GM12878 (cell line): ENCODE measurements at regions of chr10 and their contacts with region 1.

Region 1: DNA sequence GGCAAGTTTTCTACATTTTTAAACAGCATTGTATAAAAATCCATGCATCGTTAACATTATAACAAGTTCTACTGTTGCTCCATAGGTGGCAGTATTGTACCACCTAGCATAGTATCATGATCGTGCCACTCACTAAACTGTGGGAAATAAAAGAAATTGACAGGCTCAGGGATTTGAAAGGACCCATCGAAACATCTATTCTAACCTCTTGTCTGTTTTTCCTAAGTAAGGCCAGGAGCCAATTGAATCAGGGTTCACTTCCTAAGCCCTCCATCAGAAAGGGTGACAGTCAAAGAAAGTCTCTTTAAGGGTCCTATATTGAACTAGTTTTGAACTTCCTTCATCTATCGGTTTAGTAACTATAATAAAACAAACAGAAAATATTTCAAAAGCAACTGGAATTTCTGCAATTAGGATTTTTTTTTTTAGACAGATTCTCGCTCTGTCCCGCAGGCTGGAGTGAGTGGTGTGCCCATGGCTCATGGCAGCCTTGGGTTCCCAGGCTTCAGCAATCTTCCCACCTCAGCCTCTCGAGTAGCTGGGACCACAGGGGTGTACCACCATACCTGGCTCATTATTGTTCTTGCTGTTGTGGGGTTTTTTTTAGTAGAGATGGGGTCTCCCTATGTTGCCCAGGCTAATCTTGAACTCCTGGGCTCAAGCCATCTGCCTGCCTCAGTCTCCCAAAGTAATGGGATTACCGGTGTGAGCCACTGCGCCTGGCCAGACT is 9.4 kb downstream of the HACD1 start:
- DNase-seq: no peak
- ATAC-seq: peak; percentile 91
- H3K4me3 ChIP-seq: no peak overlapping the region
- H3K27ac ChIP-seq: no peak overlapping the region
- H3K4me1 ChIP-seq: no peaks in the 10 kb centered on the region
- H3K27me3 ChIP-seq: no peaks in the 10 kb centered on the region
- CTCF ChIP-seq: peak; percentile 74 to 88 (median 79)
- EP300 ChIP-seq: no peak
- POLR2A ChIP-seq: no peak
- RAD21 ChIP-seq: peak; percentile 96

Region 2: DNA sequence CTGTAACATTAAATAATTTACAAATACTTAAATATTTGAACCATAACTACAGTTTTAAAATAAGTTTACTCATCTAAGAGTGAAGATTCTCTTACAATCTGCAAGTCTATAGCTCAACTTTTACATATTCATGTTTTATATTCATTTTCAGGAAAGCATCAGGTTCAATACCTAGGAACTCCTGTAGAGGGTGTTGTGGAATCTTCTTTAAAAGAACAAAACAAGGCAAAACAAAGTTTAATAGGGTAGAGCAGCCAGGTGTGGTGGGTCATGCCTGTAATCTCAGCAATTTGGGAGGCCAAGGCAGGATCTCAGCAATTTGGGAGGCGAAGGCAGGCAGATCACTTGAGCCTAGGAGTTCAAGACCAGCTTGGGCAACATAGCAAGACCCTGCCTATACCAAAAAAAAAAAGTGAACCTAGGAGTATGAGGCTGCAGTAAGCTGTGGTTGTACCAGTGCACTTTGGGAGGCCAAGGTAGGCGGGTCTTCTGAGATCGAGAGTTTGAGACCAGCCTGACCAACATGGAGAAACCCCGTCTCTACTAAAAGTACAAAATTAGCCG is 198.5 kb before region 1 on chr10:
- CTCF ChIA-PET with region 1: interaction called, 19 read pairs
- POLR2A ChIA-PET with region 1: no interaction called
- RAD21 ChIA-PET with region 1: interaction called, 4 read pairs
- SMC1A ChIA-PET with region 1: interaction called, 4 read pairs
- in situ Hi-C with region 1: no loop called
- intact Hi-C with region 1: no loop called
- DNase-seq: no peak
- ATAC-seq: peak; percentile 54; the same call in 2 of the 3 replicates
- H3K4me3 ChIP-seq: no peak overlapping the region
- H3K27ac ChIP-seq: no peak overlapping the region
- H3K4me1 ChIP-seq: no peaks in the 10 kb centered on the region
- H3K27me3 ChIP-seq: no peaks in the 10 kb centered on the region
- CTCF ChIP-seq: peak; percentile 40 to 50 (median 50)
- EP300 ChIP-seq: no peak
- POLR2A ChIP-seq: no peak
- RAD21 ChIP-seq: peak; percentile 47

Region 3: DNA sequence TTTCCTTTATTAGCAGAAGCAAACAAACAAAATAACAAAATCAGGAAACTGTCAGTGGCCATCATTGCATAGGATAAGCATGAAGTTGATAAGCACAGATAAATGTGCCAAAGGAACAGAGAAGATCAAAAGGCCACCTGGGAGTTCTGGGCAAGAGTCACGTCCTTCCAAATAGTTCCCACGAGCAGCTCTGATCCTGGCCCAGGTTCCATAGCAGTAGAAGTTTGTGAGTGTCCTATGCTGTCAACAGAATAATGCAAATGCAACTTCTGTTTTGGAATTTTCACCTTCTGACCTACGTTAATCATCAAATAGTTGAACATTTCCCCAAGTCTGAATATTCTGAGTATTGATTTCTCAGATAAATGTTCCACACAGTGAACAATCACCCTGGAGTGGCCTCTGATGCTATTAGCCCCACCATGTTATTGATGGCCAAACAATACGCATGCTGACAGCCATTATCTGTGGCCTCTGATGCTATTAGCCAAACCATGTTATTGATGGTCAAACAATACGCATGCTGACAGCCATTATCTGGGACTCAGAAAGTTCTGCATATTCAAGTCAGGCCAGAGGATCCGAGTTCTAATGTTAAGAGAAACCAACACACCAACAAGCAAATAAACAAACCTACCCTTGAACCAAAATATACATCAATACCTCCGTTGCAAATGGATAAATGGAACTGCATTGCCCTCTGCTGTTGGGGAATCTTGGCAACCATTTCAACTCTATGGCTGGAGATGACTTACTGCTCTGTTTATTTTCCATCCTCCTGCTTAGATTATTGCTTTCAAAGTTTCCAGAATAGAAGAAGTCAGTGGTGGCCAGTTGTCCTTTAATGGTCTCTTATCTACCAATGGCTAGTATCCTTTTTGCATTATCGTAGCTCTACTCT is 264.7 kb after region 1 on chr10:
- CTCF ChIA-PET with region 1: interaction called, 4 read pairs
- POLR2A ChIA-PET with region 1: no interaction called
- RAD21 ChIA-PET with region 1: no interaction called
- SMC1A ChIA-PET with region 1: interaction called, 3 read pairs
- in situ Hi-C with region 1: no loop called
- intact Hi-C with region 1: loop called (anchors 1 kb)
- DNase-seq: no peak
- ATAC-seq: peak; percentile 68
- H3K4me3 ChIP-seq: no peak overlapping the region
- H3K27ac ChIP-seq: no peak overlapping the region
- H3K4me1 ChIP-seq: no peaks in the 10 kb centered on the region
- H3K27me3 ChIP-seq: no peaks in the 10 kb centered on the region
- CTCF ChIP-seq: peak; percentile 33 to 52 (median 35); a peak in 4 of 6 replicates
- EP300 ChIP-seq: no peak
- POLR2A ChIP-seq: no peak
- RAD21 ChIP-seq: peak; percentile 51

Region 4: GRCh38 chr10:18214691-18215563 is 607.2 kb after region 1 on chr10:
- CTCF ChIA-PET with region 1: interaction called, 3 read pairs
- POLR2A ChIA-PET with region 1: no interaction called
- RAD21 ChIA-PET with region 1: no interaction called
- SMC1A ChIA-PET with region 1: interaction called, 3 read pairs
- in situ Hi-C with region 1: loop called (anchors 10 kb)
- intact Hi-C with region 1: loop called (anchors 1 kb)
- DNase-seq: no peak
- ATAC-seq: peak; percentile 84
- H3K4me3 ChIP-seq: no peak overlapping the region
- H3K27ac ChIP-seq: no peak overlapping the region
- H3K4me1 ChIP-seq: no peaks in the 10 kb centered on the region
- H3K27me3 ChIP-seq: no peaks in the 10 kb centered on the region; a peak in 1 of 4 replicates
- CTCF ChIP-seq: peak; percentile 66 to 82 (median 77)
- EP300 ChIP-seq: no peak
- POLR2A ChIP-seq: no peak
- RAD21 ChIP-seq: peak; percentile 84

Region 5: DNA sequence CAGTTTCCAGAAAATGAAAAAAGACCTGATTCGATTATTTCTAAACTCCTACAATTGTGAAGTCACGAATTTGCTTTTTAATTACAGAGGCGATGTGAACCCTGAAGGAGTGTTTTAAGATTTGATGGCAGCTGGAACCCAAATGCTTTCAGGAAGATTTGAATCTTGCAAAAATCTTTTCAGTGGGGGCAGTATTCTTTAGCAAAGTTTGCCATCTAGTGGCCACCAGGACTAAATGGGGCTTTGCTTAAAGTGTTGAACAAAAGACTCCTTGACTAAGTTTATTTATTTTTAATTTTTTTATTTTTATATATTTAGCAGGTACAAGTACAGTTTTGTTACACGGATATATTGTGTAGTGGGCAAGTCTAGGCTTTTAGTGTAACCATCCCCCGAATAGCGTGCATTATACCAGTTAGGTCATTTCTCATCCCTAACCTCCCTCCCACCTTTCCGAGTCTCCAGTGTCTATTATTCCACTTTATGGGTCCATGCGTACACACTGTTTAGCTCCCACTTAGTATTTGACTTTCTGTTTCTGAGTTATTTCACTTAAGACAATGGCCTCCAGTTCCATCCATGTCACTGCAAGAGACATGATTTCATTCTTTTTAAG is 631.2 kb after region 1 on chr10:
- CTCF ChIA-PET with region 1: interaction called, 3 read pairs
- POLR2A ChIA-PET with region 1: no interaction called
- RAD21 ChIA-PET with region 1: no interaction called
- SMC1A ChIA-PET with region 1: no interaction called
- in situ Hi-C with region 1: no loop called
- intact Hi-C with region 1: loop called (anchors 5 kb)
- DNase-seq: no peak
- ATAC-seq: peak; percentile 66
- H3K4me3 ChIP-seq: no peak overlapping the region
- H3K27ac ChIP-seq: no peak overlapping the region
- H3K4me1 ChIP-seq: no peaks in the 10 kb centered on the region
- H3K27me3 ChIP-seq: peaks cover 0 to 3% of the 10 kb centered on the region in 2 experiments; a peak in 2 of 4 replicates
- CTCF ChIP-seq: peak; percentile 51 to 68 (median 58); a peak in 5 of 6 replicates
- EP300 ChIP-seq: no peak
- POLR2A ChIP-seq: no peak
- RAD21 ChIP-seq: peak; percentile 77